MCF 10A (cell line): ENCODE measurements at regions of chr10 and their contacts with region 1.

Region 1: DNA sequence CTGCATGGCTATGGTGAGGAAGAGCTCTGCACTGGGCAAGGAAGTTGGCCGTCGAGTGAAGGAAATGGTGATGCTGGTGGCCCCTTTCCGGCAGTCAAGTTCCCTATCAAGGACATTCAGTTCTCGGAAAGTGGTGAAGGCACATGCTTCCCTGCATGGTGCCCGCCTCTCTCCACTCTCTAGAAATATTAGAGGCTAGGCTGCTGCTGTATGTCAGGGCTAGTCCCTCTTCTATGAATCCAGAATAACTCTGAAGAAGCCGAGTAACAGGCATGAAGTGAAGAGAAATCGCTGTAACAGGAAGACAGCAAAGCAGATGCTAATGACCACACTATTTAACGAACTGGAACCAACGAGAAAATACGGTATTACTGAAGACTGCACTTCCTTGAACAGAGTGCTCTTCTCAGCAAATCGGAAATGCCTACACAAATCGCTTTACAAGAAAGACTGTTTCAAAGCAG is 5.4 kb downstream of the IDI1 start:
- DNase-seq: no peak
- H3K4me3 Mint-ChIP-seq: no peak overlapping the region
- H3K27ac Mint-ChIP-seq: no peak overlapping the region
- H3K4me1 Mint-ChIP-seq: peaks cover 29% of the 10 kb centered on the region
- H3K27me3 Mint-ChIP-seq: no peaks in the 10 kb centered on the region
- CTCF ChIP-seq: no peak

Region 2: DNA sequence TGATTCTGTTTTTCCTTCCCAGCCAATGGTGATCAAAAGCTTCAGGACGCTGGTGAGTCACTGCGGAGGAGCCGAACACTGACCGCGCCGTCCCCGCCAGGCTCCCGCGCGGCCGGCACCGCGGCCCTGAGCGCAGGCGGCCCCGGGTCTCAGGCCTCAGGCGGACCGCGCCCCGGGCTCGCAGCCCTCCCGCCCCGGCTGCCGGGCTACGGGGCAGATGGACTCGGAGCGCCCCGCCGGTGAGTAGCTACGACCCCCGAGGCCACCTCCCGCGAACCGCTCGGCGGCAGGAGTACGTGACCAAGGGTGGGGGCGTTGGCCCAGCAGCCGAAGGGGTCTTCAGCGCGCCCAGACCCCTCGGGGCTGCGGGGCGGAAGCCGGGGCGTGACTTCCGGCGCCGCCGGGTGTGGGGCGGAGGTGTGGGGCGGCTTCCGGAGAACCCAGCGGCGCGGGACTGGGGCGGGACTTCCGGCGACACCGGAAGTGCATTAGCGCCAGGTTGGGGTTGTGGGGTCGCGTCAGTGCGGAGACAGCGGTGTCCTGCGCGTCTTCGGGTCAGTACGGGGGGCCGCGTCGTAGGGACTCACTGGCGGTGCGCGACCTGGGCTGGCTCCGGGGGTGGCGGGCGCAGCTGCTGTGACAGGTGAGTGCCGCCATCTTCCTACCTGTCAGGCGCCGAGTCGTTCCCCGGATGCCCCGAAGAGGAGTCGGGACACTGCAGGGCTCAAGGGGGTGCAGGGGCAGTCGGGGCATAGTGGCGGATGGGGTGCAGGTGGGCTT is 13.0 kb after region 1 on chr10 and contains the start of gene WDR37:
- CTCF ChIA-PET with region 1: no interaction called
- POLR2A ChIA-PET with region 1: interaction called, 217 read pairs
- intact Hi-C with region 1: no loop called
- DNase-seq: peak; percentile 87
- H3K4me3 Mint-ChIP-seq: peak within 1 kb of the TSS; percentile 99
- H3K27ac Mint-ChIP-seq: peak within 1 kb of the TSS; percentile 95
- H3K4me1 Mint-ChIP-seq: peaks cover 30% of the 10 kb centered on the region
- H3K27me3 Mint-ChIP-seq: no peaks in the 10 kb centered on the region
- CTCF ChIP-seq: no peak
- total RNA-seq, gene WDR37: 14.2 and 18.2 TPM in 2 replicates